Panc1 (cell line): ENCODE measurements at regions of chr2 and their contacts with region 1.

Region 1: DNA sequence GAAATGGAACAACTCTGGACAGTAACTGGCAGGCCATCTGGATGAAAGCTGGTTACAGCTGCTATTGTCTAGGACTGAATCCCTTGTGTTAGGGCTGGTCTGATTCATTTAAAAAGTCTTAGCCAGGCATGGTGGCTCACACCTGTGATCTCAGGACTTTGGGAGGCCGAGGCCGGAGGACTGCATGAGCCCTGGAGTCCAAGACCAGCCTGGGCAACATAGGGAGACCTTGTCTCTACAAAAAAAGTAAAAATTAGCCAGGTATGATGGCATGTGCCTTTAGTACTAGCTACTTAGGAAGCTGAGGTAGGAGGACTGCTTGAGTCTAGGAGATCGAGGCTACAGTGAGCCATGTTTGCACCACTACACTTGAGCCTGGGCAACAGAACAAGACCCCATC is 15.5 kb upstream of the CFLAR start:
- DNase-seq: no peak
- ATAC-seq: 0 out of 2 replicates have a peak, but pooled peaks have one; percentile 34
- H3K4me3 ChIP-seq: no peak overlapping the region
- H3K27ac ChIP-seq: no peak overlapping the region
- H3K4me1 ChIP-seq: no peaks in the 10 kb centered on the region
- H3K27me3 ChIP-seq: no peaks in the 10 kb centered on the region
- CTCF ChIP-seq: no peak

Region 2: DNA sequence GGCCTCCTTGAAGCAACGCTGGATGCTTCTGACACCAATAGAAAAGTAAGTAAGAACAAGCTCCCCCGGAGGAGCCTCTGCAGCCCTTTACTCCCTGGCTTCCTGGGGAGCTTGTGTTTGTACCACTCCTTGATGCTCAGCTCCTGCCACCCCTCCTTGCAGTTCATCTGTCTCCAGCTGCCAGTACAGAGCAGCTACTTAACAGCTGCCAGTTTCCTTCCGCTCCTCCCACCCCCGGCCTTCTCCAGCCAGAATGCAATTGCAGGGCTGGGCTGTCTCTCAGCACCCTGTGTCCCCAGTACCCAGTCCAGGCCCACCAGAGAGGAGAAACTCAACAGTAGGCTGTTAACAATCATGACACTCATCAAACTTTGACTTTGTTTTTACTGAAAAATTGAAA is 405.3 kb before region 1 on chr2:
- CTCF ChIA-PET with region 1: no interaction called
- POLR2A ChIA-PET with region 1: no interaction called
- in situ Hi-C with region 1: no loop called
- intact Hi-C with region 1: no loop called
- DNase-seq: no peak
- ATAC-seq: no peak
- H3K4me3 ChIP-seq: no peak overlapping the region
- H3K27ac ChIP-seq: no peak overlapping the region
- H3K4me1 ChIP-seq: no peaks in the 10 kb centered on the region
- H3K27me3 ChIP-seq: no peaks in the 10 kb centered on the region
- CTCF ChIP-seq: no peak

Region 3: DNA sequence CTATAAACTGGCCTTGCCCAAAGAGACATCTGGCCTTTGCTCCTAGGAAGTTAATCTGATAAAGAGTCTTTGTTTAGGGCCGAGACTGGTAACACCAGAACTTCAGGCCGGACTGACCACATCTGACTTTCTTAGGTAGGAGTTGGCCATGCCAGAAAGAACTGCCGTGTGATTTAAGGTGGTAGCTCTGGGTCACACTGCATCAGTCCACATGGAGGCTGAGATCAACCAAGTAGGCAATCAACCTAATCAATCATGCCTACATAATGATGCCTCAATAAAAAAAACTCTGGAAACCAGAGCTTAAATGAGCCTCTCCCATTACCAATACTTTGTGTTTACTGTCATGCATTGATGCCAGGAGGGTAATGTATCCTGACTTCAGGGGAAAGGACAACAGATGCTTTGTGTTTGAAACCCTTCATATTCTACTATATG is 92.9 kb before region 1 on chr2:
- CTCF ChIA-PET with region 1: no interaction called
- POLR2A ChIA-PET with region 1: no interaction called
- in situ Hi-C with region 1: no loop called
- intact Hi-C with region 1: no loop called
- DNase-seq: no peak
- ATAC-seq: no peak
- H3K4me3 ChIP-seq: no peak overlapping the region
- H3K27ac ChIP-seq: no peak overlapping the region
- H3K4me1 ChIP-seq: no peaks in the 10 kb centered on the region
- H3K27me3 ChIP-seq: no peaks in the 10 kb centered on the region
- CTCF ChIP-seq: no peak

Region 4: DNA sequence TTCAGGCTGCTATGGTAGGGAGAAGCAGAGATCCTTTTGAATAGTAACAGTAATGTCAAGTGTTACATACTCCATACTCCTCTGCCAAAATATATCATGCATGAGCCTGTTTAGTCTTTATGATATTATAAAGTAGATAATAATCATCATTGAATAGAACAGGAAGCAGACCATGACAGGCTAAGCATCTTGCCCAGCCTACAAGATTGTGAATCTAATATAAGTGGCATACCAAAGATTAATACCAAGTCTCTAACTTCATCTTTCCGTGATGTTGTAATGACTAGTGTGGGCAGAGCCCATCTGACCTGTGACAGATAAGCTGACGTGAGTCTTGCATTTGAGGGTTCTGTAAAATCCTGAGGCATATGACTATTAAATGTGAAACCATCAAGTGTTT is 15.6 kb before region 1 on chr2:
- CTCF ChIA-PET with region 1: interaction called, 10 read pairs
- POLR2A ChIA-PET with region 1: no interaction called
- in situ Hi-C with region 1: no loop called
- intact Hi-C with region 1: no loop called
- DNase-seq: no peak
- ATAC-seq: no peak
- H3K4me3 ChIP-seq: no peak overlapping the region
- H3K27ac ChIP-seq: no peak overlapping the region
- H3K4me1 ChIP-seq: no peaks in the 10 kb centered on the region
- H3K27me3 ChIP-seq: no peaks in the 10 kb centered on the region
- CTCF ChIP-seq: no peak

Region 5: GRCh38 chr2:201171259-201171814 is 70.8 kb after region 1 on chr2:
- CTCF ChIA-PET with region 1: no interaction called
- POLR2A ChIA-PET with region 1: no interaction called
- in situ Hi-C with region 1: no loop called
- intact Hi-C with region 1: no loop called
- DNase-seq: no peak
- ATAC-seq: no peak
- H3K4me3 ChIP-seq: no peak overlapping the region
- H3K27ac ChIP-seq: no peak overlapping the region
- H3K4me1 ChIP-seq: no peaks in the 10 kb centered on the region
- H3K27me3 ChIP-seq: no peaks in the 10 kb centered on the region
- CTCF ChIP-seq: no peak